ENCODE measurements at regions of chr6 and their contacts with region 1.

Region 1: GRCh38 chr6:34810936-34811632 is 19.2 kb downstream of the BLTP3A start:
- DNase-seq: no peak
- H3K4me3 ChIP-seq: no peak overlapping the region
- CTCF ChIP-seq: no peak

Region 2: GRCh38 chr6:34723203-34723602 is 87.9 kb before region 1 on chr6:
- in situ Hi-C with region 1: loop called (anchors 10 kb)
- DNase-seq: no peak
- H3K4me3 ChIP-seq: no peak overlapping the region
- CTCF ChIP-seq: no peak

Region 3: DNA sequence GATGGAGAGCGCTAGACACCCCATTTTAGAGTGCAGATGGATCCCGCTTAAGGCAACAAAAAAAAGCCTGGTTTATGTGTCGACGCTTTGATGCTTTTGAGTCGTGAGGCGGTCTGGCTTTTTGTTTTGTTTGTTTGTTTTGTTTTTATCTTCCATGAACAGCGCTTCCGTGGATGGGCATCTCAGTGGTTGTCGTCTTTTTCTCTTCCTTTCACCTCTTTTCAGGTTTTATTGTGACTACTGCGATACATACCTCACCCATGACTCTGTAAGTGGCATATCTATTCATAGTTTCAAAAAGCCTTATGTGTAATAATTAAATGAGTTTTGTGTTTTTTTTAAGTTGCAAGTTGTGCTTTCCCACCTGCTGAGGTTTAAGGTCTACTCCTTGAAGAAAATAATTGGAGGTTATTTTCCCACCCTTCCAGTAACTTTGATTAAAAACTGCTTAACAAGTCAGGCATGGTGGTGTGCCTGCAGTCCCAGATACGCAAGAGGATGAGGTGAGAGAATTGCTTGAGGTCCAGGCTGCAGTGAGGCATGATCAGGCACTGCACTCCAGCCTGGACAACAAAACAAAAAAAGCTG is 53.3 kb before region 1 on chr6:
- in situ Hi-C with region 1: no loop called
- DNase-seq: no peak
- H3K4me3 ChIP-seq: peak overlapping the region; percentile 90
- CTCF ChIP-seq: no peak

Region 4: GRCh38 chr6:34872332-34872731 is 61.2 kb after region 1 on chr6:
- in situ Hi-C with region 1: loop called (anchors 10 kb)
- DNase-seq: no peak
- H3K4me3 ChIP-seq: no peak overlapping the region
- CTCF ChIP-seq: no peak